ENCODE measurements at regions of chr9 and their contacts with region 1.

Region 1: DNA sequence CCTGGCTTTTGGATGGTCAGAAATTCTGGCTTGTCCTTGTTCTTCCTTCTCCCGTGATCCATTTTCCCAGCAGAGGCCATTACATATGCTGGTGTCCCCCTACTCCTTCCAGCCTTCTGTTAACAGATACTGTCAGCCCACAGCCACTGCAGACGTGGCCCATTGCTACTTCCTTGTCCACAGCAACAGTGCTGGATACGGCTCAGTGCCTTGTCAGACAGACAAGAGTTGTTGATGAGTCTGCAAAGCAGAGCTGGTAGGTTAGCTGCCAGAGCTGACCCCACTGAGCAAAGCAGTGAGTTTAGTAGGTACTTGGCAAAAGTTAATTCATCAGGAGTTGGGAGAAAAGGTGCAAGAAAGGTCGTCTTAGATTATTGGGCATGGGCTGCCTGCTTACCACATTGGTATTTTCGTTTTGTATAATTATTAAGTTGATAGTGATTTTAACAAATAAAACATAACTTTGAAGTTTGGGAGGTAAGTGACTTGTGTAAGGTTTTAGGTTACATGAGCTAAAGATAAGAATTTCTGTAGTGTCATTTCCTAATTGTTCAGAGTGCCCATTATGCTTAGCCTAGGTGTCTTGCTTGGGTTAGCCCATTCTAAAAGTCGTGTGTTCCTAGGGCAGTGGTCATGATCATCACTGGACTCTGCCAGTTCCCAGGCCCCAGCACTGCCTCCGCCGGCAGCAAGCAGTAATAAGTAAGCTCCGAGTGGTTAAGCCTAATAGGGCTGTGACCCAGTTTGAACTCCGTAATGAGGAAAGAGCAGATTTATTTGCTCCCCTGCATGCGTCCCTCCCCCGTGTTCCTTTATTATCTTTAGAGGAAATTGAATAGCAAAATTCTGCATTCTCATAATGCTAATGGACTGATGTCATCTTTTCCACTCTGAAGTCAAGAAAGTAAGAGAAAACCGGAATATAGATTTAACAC is 292.0 kb downstream of the FANCC start:
- DNase-seq: peak; percentile 73 to 83 (median 82)
- ATAC-seq: peak; percentile 89
- H3K4me3 ChIP-seq: no peak overlapping the region
- H3K27ac ChIP-seq: peak overlapping the region; percentile 71
- H3K4me1 ChIP-seq: peaks cover 23% of the 10 kb centered on the region
- H3K27me3 ChIP-seq: no peaks in the 10 kb centered on the region

Region 2: GRCh38 chr9:94783102-94783664 is 242.3 kb before region 1 on chr9:
- intact Hi-C with region 1: loop called in 1 of 4 experiments (anchors 10 kb)
- DNase-seq: peak; percentile 72 to 82 (median 78)
- ATAC-seq: peak; percentile 83 to 90
- H3K4me3 ChIP-seq: no peak overlapping the region
- H3K27ac ChIP-seq: peak overlapping the region; percentile 63
- H3K4me1 ChIP-seq: peaks cover 6% of the 10 kb centered on the region
- H3K27me3 ChIP-seq: no peaks in the 10 kb centered on the region

Region 3: DNA sequence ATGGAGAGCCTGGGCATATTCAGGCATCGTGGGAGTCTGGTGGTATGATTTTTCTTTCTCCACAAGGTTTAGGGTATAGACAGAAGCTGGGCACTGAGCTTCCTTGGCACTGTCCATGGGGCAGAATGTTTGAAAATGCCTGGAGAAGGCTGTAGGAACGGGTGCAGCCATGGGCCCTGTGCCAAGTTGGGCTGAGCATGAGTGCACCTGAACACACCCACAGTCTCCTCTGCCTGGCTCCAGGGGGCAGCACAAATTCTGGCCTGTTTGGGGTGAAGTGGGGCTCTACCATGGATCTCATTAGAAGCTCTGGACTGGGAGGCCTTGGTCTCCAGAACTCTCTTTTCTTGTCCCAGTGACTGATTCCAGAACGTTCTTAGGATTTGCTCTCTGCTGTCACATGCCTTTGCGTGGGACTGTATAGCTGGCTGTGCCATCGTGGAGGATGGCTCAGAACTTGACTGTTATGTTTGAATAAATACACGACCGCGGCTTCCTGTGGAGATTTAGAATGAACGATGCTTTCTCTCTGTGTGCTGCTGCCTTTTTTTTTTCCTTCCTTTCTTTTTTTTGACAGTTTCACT is 62.3 kb after region 1 on chr9:
- intact Hi-C with region 1: loop called in 1 of 4 experiments (anchors 10 kb)
- DNase-seq: peak in 1 of 3 donors; percentile 69
- ATAC-seq: no peak
- H3K4me3 ChIP-seq: no peak overlapping the region
- H3K27ac ChIP-seq: no peak overlapping the region
- H3K4me1 ChIP-seq: peaks cover 17% of the 10 kb centered on the region
- H3K27me3 ChIP-seq: no peaks in the 10 kb centered on the region

Measured in right cardiac atrium (tissue), 5 donors.